A549 (cell line): ENCODE measurements at regions of chr6 and their contacts with region 1.

Region 1: DNA sequence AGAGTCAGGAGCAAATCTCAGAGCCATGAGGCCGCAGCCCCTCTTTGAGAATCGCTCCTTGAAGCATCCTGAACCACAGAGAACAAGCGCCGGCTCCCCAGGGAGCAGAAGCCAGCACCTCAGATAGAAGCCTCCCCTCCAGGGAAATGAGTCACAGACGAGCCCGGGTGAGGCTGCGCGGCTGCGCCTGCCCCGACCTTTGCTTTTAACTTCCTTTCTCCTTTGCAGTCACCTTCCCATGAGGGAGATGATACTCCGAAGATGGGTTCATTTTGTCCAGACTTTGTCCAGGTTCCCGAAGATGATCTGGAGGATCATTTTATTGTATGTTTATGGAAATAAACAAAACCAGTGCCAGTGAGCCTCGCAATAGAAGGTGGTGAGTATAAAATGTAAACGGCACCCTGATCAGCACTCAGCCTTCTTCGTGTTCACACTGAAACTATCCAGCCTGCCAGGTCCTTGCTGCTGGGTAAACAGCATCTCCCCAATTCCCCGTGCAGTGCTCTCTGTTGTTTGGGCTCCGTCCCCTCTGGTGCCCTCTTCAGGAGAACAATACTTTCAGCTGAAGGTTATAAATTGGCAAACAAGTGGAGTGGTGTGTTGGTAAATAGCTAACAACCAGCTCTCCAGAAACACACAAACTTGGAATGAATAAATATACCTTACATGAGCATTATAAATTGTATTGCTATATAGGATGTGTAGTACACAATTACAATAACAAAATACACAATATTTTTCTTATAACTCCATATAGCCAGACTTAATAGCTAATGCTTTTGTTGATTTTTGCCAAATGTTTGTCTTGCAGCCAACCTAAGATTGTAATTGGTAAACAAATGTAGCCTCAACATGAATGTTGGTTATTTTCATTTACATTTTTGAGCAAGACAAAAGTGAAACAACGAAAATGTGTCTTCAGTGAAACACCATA is 41.4 kb upstream of the TMEM181 start:
- DNase-seq: peak; percentile 70 to 72
- ATAC-seq: peak; percentile 92 to 95
- H3K4me3 ChIP-seq: peak overlapping the region; percentile 43
- H3K27ac ChIP-seq: peak overlapping the region; percentile 62 to 69
- H3K4me1 ChIP-seq: peaks cover 12% of the 10 kb centered on the region; the same call in 2 of the 3 replicates
- CTCF ChIP-seq: peak; percentile 58
- EP300 ChIP-seq: no peak
- POLR2A ChIP-seq: no peak
- RAD21 ChIP-seq: peak; percentile 50 to 58

Region 2: DNA sequence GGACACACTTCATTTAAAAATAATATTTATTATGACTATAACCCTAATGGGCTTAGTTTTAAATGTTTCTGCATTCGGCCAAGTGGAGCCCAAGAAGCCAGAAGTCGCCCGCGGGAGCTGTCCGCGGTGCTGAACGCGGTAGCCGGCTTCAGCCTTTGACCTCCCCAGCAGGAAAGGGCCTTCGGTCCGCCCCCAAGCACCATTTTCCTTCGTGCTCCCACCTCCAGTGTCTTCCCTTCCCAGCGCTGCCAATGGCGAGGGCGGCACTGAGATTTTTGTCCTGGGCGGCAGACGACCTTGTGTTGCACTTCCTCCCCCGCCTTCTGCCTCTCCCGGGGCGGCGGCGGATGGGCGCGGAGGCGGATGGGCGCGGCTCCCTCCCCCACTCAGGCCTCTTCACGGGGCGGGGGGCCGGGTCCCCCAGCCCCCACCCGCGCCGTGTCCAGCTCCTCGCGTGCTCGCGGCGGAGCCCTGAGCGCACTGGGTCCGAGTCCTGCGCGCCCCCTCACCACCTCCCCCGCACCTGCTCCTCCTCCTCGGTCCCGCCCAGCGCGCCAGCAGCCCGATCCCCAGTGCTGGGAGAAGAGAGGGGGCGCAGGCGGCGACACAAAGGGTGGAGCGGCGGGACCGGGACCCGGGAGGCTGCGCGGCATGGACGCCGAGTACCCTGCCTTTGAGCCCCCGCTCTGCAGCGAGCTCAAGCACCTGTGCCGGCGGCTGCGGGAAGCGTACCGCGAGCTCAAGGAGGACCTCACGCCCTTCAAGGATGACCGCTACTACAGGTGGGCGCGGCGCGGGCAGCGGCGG is 17.8 kb after region 1 on chr6:
- CTCF ChIA-PET with region 1: interaction called, 17 read pairs
- POLR2A ChIA-PET with region 1: no interaction called
- DNase-seq: peak; percentile 59 to 64
- ATAC-seq: peak; percentile 85 to 86
- H3K4me3 ChIP-seq: peak overlapping the region; percentile 59
- H3K27ac ChIP-seq: no peak overlapping the region
- H3K4me1 ChIP-seq: no peaks in the 10 kb centered on the region
- CTCF ChIP-seq: no peak
- EP300 ChIP-seq: no peak
- POLR2A ChIP-seq: no peak
- RAD21 ChIP-seq: no peak